ENCODE measurements at regions of chr4 and their contacts with region 1.

Region 1: GRCh38 chr4:37603070-37603468 is 83.1 kb downstream of the RELL1 start:
- DNase-seq: peak; percentile 67 to 97 (median 87)

Region 2: GRCh38 chr4:37359261-37359660 is 243.8 kb before region 1 on chr4:
- intact Hi-C with region 1: no loop called
- DNase-seq: no peak

Region 3: DNA sequence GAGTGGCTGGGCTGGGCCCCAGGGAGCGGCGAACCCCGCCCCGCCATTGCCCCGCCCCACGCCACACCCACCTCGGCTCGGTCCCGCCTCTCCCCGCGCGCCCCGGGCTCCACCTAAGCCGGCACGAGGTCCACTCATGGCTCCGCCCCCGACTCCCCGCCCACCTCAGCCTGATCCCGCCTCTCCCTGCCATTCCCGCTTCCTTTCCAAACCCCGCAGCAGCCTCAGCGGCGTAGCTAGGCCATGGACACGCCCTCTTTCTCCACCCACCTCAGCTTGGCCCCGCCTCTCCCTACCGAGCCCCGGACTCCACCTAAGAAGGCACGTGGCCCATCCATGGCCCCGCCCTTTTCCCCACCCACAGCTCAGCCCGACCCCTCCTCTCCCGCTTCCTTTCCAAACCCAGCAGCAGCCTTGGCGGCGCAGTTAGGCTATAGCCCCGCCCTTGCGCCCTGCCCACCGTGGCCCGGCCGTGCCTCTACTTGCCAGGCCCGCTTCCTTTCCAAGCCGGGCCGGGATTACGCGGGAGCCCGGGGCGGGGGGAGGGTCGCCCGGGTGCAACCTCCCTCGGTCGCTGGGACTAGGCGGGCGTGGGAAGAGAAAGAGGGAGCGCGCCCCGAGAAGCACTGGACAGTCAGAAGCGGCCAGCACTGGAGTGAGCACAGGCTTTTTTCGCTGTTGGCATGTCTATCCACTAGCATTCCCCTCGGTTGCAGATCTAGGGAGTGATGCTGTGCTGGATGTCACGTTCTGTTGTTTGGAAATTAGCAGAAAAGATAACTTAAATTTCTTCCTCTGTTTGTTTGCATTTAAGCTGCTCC is 83.5 kb after region 1 on chr4 and contains the start of gene RELL1:
- intact Hi-C with region 1: loop called (anchors 10 kb)
- DNase-seq: peak; percentile 99 to 100 (median 99)

Region 4: GRCh38 chr4:37780444-37781150 is 177.5 kb after region 1 on chr4:
- intact Hi-C with region 1: loop called (anchors 1 kb)
- DNase-seq: no peak

Region 5: GRCh38 chr4:38034986-38035882 is 432.2 kb after region 1 on chr4:
- intact Hi-C with region 1: loop called (anchors 5 kb)
- DNase-seq: no peak

Measured in posterior cingulate gyrus (tissue), 11 donors.